Right ventricle myocardium inferior (tissue), 1 donor: ENCODE measurements at regions of chr16 and their contacts with region 1.

Region 1: DNA sequence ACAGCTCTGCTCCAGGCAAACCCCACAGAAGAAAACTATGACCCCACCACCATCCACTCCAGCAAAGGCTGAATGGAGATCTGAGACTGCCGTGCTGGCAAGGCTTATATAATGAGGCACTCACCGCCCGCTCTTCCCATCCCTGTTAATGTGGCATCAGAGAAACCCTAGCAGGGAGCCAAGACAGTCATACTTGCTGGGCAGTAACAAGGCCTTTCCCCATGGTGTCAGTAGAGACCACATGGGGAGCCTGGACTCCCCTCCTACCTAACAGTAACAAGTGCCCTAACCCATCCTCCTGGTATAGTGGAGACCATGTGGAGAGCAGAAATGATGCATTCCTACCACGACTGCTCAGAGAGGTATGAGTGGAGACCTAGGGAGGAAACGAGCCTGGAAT is 235.2 kb downstream of the C16orf78 start:
- DNase-seq: no peak
- ATAC-seq: peak; percentile 70

Region 2: GRCh38 chr16:49348408-49349177 is 260.2 kb before region 1 on chr16:
- intact Hi-C with region 1: no loop called
- DNase-seq: no peak
- ATAC-seq: no peak

Region 3: DNA sequence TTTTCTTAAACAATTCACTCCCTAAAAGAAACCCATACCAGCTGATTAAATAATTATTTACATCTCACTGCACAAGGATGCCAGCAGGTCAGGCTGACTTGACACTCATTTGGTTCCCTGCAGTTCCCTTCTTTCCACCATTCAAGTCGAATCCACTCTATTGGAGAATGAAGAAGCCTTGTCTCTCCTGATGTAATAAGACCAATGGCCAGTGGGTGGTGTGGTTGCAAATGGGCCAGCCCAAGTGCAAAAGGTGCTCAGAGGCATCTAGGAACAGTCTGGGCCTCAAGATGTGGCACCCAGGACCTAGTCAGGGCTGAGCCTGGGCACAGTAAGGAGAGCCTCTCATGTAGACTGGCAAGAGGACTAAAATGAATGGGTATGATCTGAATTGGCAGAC is 225.9 kb before region 1 on chr16:
- intact Hi-C with region 1: no loop called
- DNase-seq: no peak
- ATAC-seq: no peak

Region 4: DNA sequence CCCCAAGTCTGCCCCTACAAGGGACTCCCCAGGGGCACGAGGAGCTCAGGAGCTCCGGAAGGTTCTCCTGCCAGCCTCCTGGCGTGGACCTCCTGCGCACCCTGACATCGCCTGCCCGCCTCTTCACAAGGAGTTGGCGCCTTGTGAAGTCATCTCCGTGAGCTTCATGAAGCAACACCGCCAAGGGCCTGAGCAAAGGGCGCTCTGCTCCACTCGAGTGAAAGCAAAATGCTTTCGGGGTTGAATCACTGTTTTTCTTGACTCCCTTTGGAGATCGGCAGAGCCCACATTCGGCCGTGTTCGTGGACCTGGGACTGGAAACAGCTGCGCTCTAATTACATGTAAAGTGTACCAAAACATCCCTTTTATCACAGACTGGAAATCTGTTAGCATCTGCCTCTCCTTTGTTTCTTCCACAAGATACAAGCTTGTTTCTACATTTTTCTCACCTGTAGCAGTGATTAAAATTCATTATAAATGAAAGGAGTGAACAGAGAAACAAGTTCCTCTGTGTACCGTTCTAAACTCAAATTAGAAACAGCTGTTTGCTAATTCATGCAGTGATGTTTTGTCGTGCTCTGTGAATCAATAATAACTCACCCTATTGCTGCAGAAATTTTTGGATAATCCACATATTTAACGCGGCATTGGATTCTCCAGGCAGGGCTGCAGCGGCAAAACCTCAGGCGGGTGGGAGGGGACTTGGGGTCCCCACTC is 43.8 kb after region 1 on chr16:
- intact Hi-C with region 1: no loop called
- DNase-seq: peak; percentile 87
- ATAC-seq: peak; percentile 82

Region 5: DNA sequence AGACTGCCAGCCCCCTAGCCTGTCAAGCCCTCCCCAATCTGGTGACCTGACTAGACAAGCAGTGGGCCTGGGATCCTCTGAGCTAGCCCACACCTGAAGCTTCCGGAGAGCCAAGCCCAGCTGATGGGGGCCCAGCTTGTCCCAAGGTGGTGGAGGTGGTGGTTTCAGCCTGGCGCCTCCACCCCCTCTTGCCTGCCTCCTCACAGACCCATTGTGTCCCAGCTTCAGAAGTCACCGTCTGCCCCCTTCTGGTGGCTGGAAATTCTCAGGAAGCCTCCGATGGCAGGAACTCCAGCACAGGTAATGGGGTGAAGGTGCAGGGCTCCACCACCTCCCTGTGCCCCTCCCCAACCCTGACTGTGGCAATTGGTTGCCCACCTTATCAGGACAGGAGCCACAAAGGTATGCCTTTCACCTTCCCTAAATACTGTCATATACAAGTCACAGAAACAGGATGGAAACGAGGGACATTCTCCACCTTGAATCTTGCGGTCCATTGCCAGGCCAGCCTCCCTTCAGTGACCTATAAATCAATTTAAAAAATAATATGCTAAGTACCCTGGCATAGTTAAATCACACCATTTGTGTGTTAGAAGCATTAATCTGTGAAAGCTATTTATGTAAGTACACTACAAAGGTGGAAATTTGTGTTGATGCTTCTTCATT is 313.1 kb after region 1 on chr16:
- intact Hi-C with region 1: loop called (anchors 2 kb)
- DNase-seq: no peak
- ATAC-seq: peak; percentile 78